ENCODE measurements at regions of chr1 and their contacts with region 1.

Region 1: DNA sequence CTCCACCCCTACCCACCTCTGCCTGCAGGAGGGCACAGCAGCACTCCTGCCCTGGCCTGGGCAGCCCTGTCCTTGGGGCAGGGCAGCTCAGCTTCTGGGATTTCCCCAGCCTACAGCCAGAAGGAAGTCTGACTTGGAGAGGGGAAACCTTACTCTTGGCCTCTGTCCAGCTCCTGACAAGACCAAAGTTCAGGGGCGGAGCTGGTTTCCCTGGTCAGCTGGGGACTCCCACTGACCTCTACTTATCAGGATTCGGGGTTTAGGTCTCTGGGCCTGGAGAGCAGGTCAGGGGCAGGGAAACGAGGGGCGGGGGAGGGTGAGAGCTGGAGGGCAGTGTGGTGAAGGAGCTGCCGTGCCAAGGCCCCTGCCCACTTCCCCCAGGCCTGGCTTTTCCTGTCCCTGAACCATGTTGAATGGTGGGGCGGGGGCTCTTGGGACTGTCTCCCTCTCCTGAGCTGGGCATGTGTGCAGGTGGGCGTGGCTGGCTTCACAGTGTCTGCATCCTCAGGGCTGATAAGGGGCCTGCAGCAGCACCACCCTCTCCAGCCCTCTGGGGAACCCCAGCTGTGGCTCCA is 16.8 kb upstream of the ETV3 start:
- DNase-seq: peak in 1 of 2 experiments; percentile 27
- H3K4me3 ChIP-seq: no peak overlapping the region
- H3K4me1 ChIP-seq: peaks cover 33% of the 10 kb centered on the region
- H3K27me3 ChIP-seq: no peaks in the 10 kb centered on the region

Region 2: GRCh38 chr1:157090196-157090647 is 64.8 kb before region 1 on chr1:
- in situ Hi-C with region 1: loop called (anchors 5 kb)
- DNase-seq: peak; percentile 68 to 94
- H3K4me3 ChIP-seq: no peak overlapping the region
- H3K4me1 ChIP-seq: peaks cover 2% of the 10 kb centered on the region
- H3K27me3 ChIP-seq: no peaks in the 10 kb centered on the region

Region 3: GRCh38 chr1:157751283-157751682 is 596.3 kb after region 1 on chr1:
- in situ Hi-C with region 1: no loop called
- DNase-seq: no peak
- H3K4me3 ChIP-seq: no peak overlapping the region
- H3K4me1 ChIP-seq: no peaks in the 10 kb centered on the region
- H3K27me3 ChIP-seq: no peaks in the 10 kb centered on the region

Region 4: DNA sequence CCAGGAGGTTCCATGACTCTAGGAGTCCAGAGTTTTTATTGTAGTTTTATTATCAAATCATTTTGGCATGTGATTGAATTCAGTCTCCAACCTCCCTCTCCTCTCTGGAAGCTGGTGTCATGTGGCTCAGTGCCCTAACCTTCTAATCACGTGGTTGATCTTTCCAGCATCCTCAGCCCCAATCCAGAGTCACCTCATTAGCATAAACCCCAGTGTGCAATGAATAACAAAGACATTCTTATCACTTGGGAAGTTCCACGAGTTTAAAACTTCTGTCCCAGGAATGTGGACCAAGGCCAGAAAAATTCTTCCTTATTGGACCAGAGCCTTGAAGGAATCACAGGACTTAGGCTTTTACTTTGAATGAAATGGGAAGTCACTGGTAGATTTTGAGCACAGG is 890.6 kb after region 1 on chr1:
- in situ Hi-C with region 1: no loop called
- DNase-seq: peak; percentile 54 to 66
- H3K4me3 ChIP-seq: no peak overlapping the region
- H3K4me1 ChIP-seq: peaks cover 21% of the 10 kb centered on the region
- H3K27me3 ChIP-seq: no peaks in the 10 kb centered on the region

Measured in HAP-1 (cell line).